ENCODE measurements at regions of chr7 and their contacts with region 1.

Region 1: DNA sequence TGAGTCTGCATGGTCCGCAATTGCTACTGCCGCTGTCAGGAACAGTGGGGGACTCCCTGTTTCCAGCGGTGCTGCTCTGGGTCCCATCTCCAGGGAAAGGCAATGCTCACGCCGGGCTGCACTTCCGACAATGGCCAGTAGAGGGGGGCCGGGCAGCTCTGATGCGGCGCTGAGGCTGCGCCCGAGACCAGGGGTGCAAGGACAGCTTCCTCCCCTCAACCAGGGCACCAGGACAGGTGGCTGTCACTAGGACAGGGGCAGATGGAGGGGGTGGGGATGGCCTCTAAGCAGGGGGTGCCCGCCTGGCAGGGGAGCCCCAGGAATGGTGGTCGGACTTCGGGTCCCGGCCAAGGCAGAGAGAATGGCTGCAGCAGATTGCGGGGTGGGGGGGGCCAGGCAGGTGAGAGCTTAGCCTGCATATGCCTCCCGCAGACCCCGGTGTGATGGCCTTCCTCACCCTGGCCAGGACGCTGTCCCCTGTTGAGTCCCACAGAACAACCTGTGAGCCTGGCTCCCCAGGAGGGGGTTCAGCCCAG is 71.0 kb upstream of the KCTD7 start:
- DNase-seq: peak; percentile 73
- ATAC-seq: peak; percentile 93
- H3K4me3 Mint-ChIP-seq: no peak overlapping the region
- H3K27ac Mint-ChIP-seq: no peak overlapping the region
- H3K4me1 Mint-ChIP-seq: peaks cover 3% of the 10 kb centered on the region
- H3K27me3 Mint-ChIP-seq: no peaks in the 10 kb centered on the region
- CTCF ChIP-seq: peak; percentile 50

Region 2: DNA sequence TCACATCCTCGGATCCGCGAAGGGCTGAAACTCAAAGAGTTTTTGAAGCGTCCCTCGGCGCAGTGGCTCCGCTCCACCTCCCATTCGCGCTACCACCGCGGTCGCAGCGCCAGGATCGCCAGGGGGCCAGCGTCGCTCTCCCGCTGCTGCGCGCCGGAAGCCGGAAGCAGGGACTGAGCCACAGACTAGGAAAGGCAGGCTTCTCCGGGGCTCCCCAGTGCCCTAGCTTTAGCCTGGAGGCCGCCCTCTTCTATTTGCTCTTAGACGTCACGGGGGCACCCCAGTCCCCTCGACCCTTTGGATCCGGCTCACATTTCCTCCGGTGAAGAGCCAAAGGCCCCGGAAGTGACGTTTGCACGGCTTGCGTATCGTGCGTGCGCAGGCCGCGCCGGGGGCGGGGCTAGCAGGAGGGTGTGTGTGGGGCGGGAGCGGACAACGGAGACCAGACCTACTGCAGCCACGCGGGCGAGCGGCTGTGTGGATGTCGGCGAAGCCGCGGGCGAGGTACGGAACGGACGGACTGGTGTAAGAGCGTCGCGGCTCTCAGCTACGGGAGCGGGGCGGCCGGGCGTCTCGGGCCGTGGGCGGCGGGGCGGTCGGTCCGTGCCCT is 96.6 kb after region 1 on chr7:
- CTCF ChIA-PET with region 1: interaction called, 4 read pairs
- POLR2A ChIA-PET with region 1: interaction called, 4 read pairs
- intact Hi-C with region 1: loop called (anchors 1 kb)
- DNase-seq: peak; percentile 97
- ATAC-seq: peak; percentile 91
- H3K4me3 Mint-ChIP-seq: peak overlapping the region; percentile 94
- H3K27ac Mint-ChIP-seq: peak overlapping the region; percentile 96
- H3K4me1 Mint-ChIP-seq: peaks cover 30% of the 10 kb centered on the region
- H3K27me3 Mint-ChIP-seq: no peaks in the 10 kb centered on the region
- CTCF ChIP-seq: no peak

Region 3: GRCh38 chr7:66768865-66769832 is 211.5 kb after region 1 on chr7:
- CTCF ChIA-PET with region 1: interaction called, 5 read pairs
- POLR2A ChIA-PET with region 1: no interaction called
- intact Hi-C with region 1: loop called (anchors 1 kb)
- DNase-seq: no peak
- ATAC-seq: peak; percentile 31
- H3K4me3 Mint-ChIP-seq: peak overlapping the region; percentile 0
- H3K27ac Mint-ChIP-seq: peak overlapping the region; percentile 76
- H3K4me1 Mint-ChIP-seq: peaks cover 62% of the 10 kb centered on the region
- H3K27me3 Mint-ChIP-seq: no peaks in the 10 kb centered on the region
- CTCF ChIP-seq: no peak

Region 4: DNA sequence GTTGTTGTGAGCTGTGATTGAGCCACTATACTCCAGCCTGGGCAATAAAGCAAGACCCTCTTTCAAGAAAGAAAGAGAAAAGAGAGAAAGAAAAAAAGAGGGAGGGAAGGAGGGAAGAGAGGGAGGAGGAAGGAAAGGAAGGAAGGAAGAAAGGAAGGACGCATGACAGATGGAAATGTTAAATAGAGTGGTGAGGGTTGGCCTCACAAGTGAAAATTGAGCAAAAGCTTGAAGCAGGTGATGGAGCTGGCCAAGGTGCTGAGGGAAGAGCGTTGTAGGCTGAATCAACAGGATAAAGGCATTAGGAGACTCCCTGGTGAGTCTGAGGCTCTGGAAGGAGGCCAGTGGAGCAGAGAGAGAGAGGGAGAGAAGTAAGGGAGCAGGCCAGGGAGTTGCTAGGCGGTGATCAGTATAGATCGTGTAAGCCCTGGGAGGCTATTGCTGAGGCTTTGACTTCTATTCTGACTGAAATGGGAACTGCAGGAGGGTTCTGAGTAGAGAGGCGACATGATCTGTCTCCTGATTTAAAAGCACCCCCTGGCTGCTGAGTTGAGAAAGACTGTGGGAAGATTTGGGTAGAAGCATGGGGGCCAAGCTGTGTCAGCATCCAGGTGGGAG is 336.9 kb after region 1 on chr7:
- CTCF ChIA-PET with region 1: interaction called, 5 read pairs
- POLR2A ChIA-PET with region 1: no interaction called
- intact Hi-C with region 1: loop called (anchors 1 kb)
- DNase-seq: no peak
- ATAC-seq: no peak
- H3K4me3 Mint-ChIP-seq: no peak overlapping the region
- H3K27ac Mint-ChIP-seq: no peak overlapping the region
- H3K4me1 Mint-ChIP-seq: no peaks in the 10 kb centered on the region
- H3K27me3 Mint-ChIP-seq: no peaks in the 10 kb centered on the region
- CTCF ChIP-seq: no peak

Region 5: DNA sequence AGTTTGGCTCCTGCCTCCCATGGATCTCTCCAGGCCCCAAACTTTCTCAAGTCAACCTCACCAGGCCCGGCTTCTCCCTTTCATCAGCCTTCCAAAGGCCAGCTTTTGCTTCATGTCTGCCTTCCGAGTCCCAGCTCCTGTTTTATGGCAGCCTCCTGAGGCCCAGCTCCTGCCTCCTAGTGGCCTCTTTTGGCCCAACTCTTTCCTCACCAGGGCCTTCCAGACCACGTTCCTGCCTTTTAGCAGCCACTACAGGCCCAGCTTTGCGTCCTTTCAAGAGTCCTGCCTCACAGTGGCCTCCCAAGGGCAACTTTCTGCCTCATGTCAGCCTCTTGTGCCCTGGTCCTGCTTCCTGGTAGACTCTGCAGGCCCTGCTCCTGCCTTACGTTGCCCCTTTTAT is 348.0 kb after region 1 on chr7:
- CTCF ChIA-PET with region 1: no interaction called
- POLR2A ChIA-PET with region 1: no interaction called
- intact Hi-C with region 1: loop called (anchors 1 kb)
- DNase-seq: no peak
- ATAC-seq: no peak
- H3K4me3 Mint-ChIP-seq: no peak overlapping the region
- H3K27ac Mint-ChIP-seq: no peak overlapping the region
- H3K4me1 Mint-ChIP-seq: no peaks in the 10 kb centered on the region
- H3K27me3 Mint-ChIP-seq: no peaks in the 10 kb centered on the region
- CTCF ChIP-seq: no peak

Measured in activated B cell treated with CpG ODN at 0.5 μM for 24 hours (primary cell).